ENCODE measurements at regions of chr1 and their contacts with region 1.

Region 1: DNA sequence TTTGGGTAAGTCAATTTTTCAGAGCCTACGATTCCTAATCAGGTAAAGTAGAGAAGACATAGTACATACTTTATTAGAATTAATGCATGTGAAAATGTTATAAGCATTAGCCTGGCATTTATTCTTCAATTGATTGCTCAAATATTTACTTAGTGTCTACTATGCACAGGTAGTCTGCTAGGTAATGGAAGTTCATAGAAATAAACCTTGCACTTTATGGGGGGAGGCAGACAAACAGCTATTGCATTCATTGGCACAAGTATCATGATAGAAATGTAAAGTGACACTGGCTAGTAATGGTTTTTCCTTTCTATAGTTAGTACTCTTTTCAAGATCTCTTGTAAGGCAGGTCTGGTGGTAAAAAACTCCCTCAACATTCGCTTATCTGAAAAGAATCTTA is 44.9 kb downstream of the ZNHIT6 start:
- DNase-seq: no peak
- ATAC-seq: no peak
- H3K4me3 ChIP-seq: no peak overlapping the region
- H3K27ac ChIP-seq: no peak overlapping the region
- H3K4me1 ChIP-seq: no peaks in the 10 kb centered on the region
- H3K27me3 ChIP-seq: no peaks in the 10 kb centered on the region
- CTCF ChIP-seq: no peak

Region 2: GRCh38 chr1:85628791-85629531 is 34.4 kb before region 1 on chr1:
- intact Hi-C with region 1: loop called in 1 of 2 experiments (anchors 2 kb)
- DNase-seq: peak; percentile 37 to 58
- ATAC-seq: peak; percentile 56 to 73 (median 65)
- H3K4me3 ChIP-seq: no peak overlapping the region
- H3K27ac ChIP-seq: peak overlapping the region; percentile 68
- H3K4me1 ChIP-seq: peaks cover 34% of the 10 kb centered on the region
- H3K27me3 ChIP-seq: no peaks in the 10 kb centered on the region
- CTCF ChIP-seq: no peak

Measured in psoas muscle (tissue), 8 donors.